Activated B cell treated with CpG ODN at 0.5 μM for 24 hours (primary cell): ENCODE measurements at regions of chr4 and their contacts with region 1.

Region 1: GRCh38 chr4:82462415-82462831 is 32.0 kb downstream of the ENOPH1 start:
- DNase-seq: peak; percentile 66
- ATAC-seq: peak; percentile 99
- H3K4me3 Mint-ChIP-seq: no peak overlapping the region
- H3K27ac Mint-ChIP-seq: no peak overlapping the region
- H3K4me1 Mint-ChIP-seq: peaks cover 22% of the 10 kb centered on the region
- H3K27me3 Mint-ChIP-seq: no peaks in the 10 kb centered on the region
- CTCF ChIP-seq: no peak

Region 2: GRCh38 chr4:82739316-82740179 is 277.1 kb after region 1 on chr4:
- CTCF ChIA-PET with region 1: interaction called, 11 read pairs
- POLR2A ChIA-PET with region 1: no interaction called
- intact Hi-C with region 1: loop called (anchors 1 kb)
- DNase-seq: peak; percentile 27
- ATAC-seq: peak; percentile 49
- H3K4me3 Mint-ChIP-seq: no peak overlapping the region
- H3K27ac Mint-ChIP-seq: no peak overlapping the region
- H3K4me1 Mint-ChIP-seq: no peaks in the 10 kb centered on the region
- H3K27me3 Mint-ChIP-seq: peaks cover 8% of the 10 kb centered on the region
- CTCF ChIP-seq: no peak

Region 3: DNA sequence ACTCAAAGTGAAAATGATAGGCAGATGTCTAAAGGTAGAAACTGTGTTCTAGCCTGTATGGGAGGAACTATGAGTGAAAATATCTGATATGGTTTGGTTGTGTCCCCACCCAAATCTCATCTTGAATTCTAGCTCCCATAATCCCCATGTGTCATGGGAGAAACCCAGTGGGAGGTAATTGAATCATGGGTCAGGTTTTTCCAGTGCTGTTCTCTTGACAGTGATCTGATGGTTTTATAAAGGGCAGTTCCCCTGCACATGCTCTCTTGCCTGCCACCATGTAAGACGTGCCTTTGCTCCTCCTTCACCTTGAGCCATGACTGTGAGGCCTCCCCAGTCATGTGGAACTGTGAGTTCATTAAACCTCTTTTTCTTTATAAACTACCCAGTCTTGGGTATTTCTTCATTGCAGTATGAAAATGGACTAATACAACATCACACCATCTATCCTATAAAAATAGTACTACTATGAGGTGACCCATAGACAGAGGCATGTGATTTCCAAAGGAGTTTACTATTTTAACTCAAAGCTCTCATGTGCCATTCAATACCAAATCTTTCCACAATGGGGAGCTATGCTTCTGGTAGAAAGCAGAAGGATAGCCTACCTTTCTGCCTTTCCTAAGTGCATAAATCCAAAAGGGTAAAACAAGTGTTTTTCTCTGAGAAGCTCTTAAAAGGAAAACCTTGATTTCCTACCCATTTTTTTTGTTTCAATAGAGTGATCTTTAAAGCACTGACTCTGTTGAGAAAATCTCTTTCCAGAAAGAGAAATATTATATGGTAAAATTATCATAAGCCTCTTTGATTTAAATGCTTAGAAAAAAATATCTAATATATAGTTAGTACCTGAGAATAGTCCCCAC is 389.7 kb after region 1 on chr4:
- CTCF ChIA-PET with region 1: no interaction called
- POLR2A ChIA-PET with region 1: no interaction called
- intact Hi-C with region 1: loop called (anchors 2 kb)
- DNase-seq: no peak
- ATAC-seq: no peak
- H3K4me3 Mint-ChIP-seq: no peak overlapping the region
- H3K27ac Mint-ChIP-seq: no peak overlapping the region
- H3K4me1 Mint-ChIP-seq: no peaks in the 10 kb centered on the region
- H3K27me3 Mint-ChIP-seq: no peaks in the 10 kb centered on the region
- CTCF ChIP-seq: no peak

Region 4: GRCh38 chr4:82900331-82901128 is 438.1 kb after region 1 on chr4 and contains the start of gene THAP9:
- CTCF ChIA-PET with region 1: interaction called, 3 read pairs
- POLR2A ChIA-PET with region 1: no interaction called
- intact Hi-C with region 1: loop called (anchors 1 kb)
- DNase-seq: peak; percentile 92
- ATAC-seq: peak; percentile 90
- H3K4me3 Mint-ChIP-seq: no peak within 1 kb of the TSS
- H3K27ac Mint-ChIP-seq: no peak within 1 kb of the TSS
- H3K4me1 Mint-ChIP-seq: peaks cover 20% of the 10 kb centered on the region
- H3K27me3 Mint-ChIP-seq: no peaks in the 10 kb centered on the region
- CTCF ChIP-seq: no peak
- total RNA-seq, gene THAP9: 2.1 and 3.1 TPM in 2 replicates

Region 5: GRCh38 chr4:83259586-83259985 is 797.2 kb after region 1 on chr4:
- CTCF ChIA-PET with region 1: no interaction called
- POLR2A ChIA-PET with region 1: no interaction called
- intact Hi-C with region 1: loop called (anchors 5 kb)
- DNase-seq: no peak
- ATAC-seq: no peak
- H3K4me3 Mint-ChIP-seq: peak overlapping the region; percentile 3
- H3K27ac Mint-ChIP-seq: peak overlapping the region; percentile 37
- H3K4me1 Mint-ChIP-seq: peaks cover 53% of the 10 kb centered on the region
- H3K27me3 Mint-ChIP-seq: no peaks in the 10 kb centered on the region
- CTCF ChIP-seq: no peak